GM13976 (cell line): ENCODE measurements at regions of chr17 and their contacts with region 1.

Region 1: DNA sequence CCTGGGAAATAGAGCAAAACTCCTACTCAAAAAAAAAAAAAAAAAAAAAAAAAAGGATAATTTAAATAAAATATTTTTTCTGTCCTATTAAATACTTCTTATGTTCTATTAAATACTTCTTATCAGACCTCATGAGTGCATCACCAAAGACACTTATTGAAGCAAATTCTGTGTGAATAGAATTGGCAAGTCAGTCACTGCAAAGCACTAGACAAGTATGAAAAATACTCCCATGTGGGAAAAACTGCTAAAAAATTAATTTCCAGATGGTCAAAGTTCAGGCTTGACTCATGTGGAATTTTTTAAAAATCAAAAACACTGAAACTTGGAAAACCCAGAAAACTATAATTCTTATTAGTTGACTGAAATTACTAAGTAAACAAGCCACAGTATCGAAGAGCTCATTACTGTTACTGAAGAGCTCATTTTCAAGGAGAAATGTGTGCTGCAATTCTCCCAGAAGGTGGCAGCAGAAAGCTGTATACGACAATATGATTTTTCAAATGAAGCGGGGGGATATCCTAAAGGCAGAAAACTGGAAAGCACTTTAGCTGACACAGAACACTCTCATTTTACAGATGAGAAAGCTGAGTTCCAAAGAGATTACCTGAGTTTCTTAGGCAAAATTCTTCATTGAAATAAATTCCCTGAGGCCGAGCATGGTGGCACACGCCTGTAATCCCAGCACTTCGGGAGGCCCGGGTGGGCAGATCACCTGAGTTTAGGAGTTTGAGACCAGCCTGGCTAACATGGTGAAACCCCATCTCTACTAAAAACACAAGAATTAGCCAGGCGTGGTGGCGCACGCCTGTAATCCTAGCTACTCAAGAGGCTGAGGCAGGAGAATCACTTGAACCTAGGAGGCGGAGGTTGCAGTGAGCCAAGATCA is 15.9 kb upstream of the FBXO47 start:
- DNase-seq: peak; percentile 72
- CTCF ChIP-seq: peak; percentile 75

Region 2: GRCh38 chr17:39118674-39119419 is 135.7 kb after region 1 on chr17:
- in situ Hi-C with region 1: no loop called
- DNase-seq: peak; percentile 77
- CTCF ChIP-seq: no peak

Region 3: GRCh38 chr17:39153599-39154051 is 170.5 kb after region 1 on chr17:
- in situ Hi-C with region 1: loop called (anchors 10 kb)
- DNase-seq: peak; percentile 76
- CTCF ChIP-seq: no peak